ENCODE measurements at regions of chr1 and their contacts with region 1.

Region 1: GRCh38 chr1:27515637-27516036 is 25.7 kb upstream of the WASF2 start:
- DNase-seq: no peak
- H3K4me3 ChIP-seq: no peak overlapping the region
- H3K27ac ChIP-seq: no peak overlapping the region
- H3K27me3 ChIP-seq: no peaks in the 10 kb centered on the region
- CTCF ChIP-seq: no peak

Region 2: DNA sequence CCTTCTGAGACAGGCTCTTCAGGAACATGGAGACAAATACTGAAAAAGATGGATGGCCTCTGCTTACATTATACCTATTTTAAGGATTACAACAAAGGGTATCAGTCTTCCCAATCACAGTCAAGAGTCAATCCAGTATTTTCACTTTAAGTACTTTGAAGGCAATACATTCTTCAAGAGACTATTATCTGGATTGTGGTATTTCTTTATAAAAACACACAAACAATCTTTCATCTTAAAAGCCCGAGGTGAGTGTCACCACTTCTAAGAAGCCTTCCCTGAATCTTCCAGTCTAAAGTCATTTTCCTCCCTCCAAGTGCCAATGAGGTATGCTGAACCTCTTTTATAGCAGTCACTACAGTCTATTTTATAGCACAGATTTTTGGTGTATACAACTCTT is 71.0 kb before region 1 on chr1:
- CTCF ChIA-PET with region 1: no interaction called
- POLR2A ChIA-PET with region 1: no interaction called
- DNase-seq: no peak
- H3K4me3 ChIP-seq: no peak overlapping the region
- H3K27ac ChIP-seq: no peak overlapping the region
- H3K27me3 ChIP-seq: no peaks in the 10 kb centered on the region
- CTCF ChIP-seq: no peak

Region 3: GRCh38 chr1:27621051-27621920 is 105.6 kb after region 1 on chr1:
- CTCF ChIA-PET with region 1: no interaction called
- POLR2A ChIA-PET with region 1: interaction called, 10 read pairs
- DNase-seq: no peak
- H3K4me3 ChIP-seq: no peak overlapping the region
- H3K27ac ChIP-seq: no peak overlapping the region
- H3K27me3 ChIP-seq: peaks cover 19% of the 10 kb centered on the region
- CTCF ChIP-seq: no peak

Measured in AG04450 (cell line).